ENCODE measurements at regions of chr7 and their contacts with region 1.

Region 1: GRCh38 chr7:100101016-100101862 is at the starts of genes AP4M1 and MCM7:
- DNase-seq: peak; percentile 98
- ATAC-seq: peak; percentile 85
- H3K4me3 ChIP-seq: peak within 1 kb of the TSS; percentile 80
- H3K27ac ChIP-seq: peak within 1 kb of the TSS; percentile 93
- H3K4me1 ChIP-seq: peaks cover 19% of the 10 kb centered on the region
- H3K27me3 ChIP-seq: no peaks in the 10 kb centered on the region
- CTCF ChIP-seq: no peak
- total RNA-seq, gene AP4M1: 17.9 and 23.9 TPM in 2 replicates
- total RNA-seq, gene MCM7: 208 and 226 TPM in 2 replicates

Region 2: DNA sequence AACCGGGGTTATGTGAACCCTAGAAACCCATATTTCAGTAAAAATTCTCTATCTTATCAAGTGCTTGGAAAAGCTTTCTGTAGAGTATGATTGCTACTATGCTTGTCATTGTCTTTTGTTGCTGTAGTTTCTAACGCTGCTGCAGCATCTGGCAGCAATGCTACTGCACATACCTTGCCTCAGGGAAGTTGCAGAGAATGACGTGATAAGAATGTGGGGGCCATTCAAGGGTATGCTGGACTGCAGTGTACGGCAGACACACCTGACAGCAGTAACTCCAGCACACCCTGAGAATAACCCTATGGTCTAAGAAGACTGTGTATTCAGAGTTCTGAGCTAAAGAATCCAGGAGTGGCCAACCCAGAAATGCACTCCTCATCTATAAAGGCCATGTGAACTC is 202.4 kb before region 1 on chr7:
- CTCF ChIA-PET with region 1: no interaction called
- POLR2A ChIA-PET with region 1: no interaction called
- intact Hi-C with region 1: no loop called
- DNase-seq: no peak
- ATAC-seq: no peak
- H3K4me3 ChIP-seq: no peak overlapping the region
- H3K27ac ChIP-seq: no peak overlapping the region
- H3K4me1 ChIP-seq: no peaks in the 10 kb centered on the region
- H3K27me3 ChIP-seq: no peaks in the 10 kb centered on the region
- CTCF ChIP-seq: no peak

Region 3: DNA sequence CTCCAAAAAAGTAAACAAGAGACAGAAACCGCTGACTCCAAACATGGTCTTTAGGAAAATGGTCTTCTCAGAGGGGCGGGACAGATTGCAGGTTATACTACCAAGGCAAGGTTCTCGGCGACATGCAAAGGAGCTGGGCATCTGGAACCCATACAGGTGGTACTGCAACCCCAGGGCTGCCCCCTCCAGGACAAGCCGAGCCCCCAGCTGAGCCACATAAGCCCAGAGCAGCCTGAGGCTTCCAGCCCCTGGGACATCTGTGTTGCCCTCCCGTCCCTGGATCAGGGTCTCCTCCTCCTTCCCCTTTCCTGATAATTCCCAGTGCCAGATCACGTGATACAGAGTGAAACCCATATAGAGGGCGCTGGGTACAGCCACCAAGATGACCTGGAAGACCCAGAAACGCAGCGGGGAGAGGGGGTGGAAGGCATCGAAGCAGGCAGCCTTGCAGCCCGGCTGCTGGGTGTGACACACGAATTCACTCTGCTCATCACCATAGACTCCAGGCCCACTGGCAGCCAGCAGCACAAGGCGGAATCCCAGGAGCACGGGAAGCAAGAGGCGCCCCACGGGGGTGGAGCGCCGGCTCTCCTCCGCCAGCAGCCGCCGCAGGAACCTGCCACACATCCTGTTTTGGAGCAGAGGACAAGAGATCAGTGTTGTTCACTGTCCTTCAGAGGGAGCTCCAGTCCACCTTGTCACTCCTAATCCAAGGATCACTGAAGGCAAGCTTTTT is 172.1 kb before region 1 on chr7 and contains the start of gene GJC3:
- CTCF ChIA-PET with region 1: no interaction called
- POLR2A ChIA-PET with region 1: no interaction called
- intact Hi-C with region 1: no loop called
- DNase-seq: peak; percentile 59
- ATAC-seq: peak; percentile 99
- H3K4me3 ChIP-seq: peak within 1 kb of the TSS; percentile 56
- H3K27ac ChIP-seq: no peak within 1 kb of the TSS
- H3K4me1 ChIP-seq: no peaks in the 10 kb centered on the region; the same call in 1 of the 2 replicates
- H3K27me3 ChIP-seq: peaks cover 31% of the 10 kb centered on the region
- CTCF ChIP-seq: peak; percentile 57
- total RNA-seq, gene GJC3: 0.18 TPM in 1 of 2 replicates, not detected in the other

Region 4: DNA sequence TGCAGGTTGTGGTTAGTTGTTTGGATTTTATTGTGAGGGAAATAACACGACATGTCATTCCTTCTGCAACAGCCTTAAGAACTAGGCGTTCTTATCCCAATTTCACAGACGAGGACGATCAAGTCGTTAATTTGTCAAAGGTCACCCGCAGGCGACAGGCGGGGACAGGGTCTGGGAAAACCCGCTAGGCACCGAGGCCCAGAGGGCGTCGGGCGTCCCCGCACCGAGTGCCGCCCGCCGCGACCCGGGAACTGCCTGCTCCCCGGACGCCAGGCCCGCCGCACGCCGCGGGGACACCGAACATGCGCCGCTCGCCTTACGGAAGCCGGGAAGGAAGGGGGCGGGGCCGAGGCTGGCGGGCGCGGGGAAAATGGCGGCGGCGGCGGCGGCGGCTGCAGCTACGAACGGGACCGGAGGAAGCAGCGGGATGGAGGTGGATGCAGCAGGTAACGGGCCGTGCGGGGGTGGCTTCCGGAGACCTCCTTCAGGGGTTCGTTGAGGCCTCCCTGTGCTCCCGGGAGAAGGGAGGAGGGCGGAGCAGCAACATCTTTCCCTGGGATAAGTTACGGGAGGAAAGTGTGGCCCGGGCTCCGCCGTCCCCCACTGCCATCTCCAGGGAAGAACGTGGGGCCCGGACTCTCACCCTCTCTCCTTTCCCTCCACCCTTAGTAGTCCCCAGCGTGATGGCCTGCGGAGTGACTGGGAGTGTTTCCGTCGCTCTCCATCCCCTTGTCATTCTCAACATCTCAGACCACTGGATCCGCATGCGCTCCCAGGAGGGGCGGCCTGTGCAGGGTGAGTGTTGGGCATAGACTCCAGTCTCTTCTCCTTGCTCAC is 12.4 kb before region 1 on chr7 and contains the start of gene COPS6:
- CTCF ChIA-PET with region 1: no interaction called
- POLR2A ChIA-PET with region 1: no interaction called
- intact Hi-C with region 1: loop called (anchors 1 kb)
- DNase-seq: peak; percentile 63
- ATAC-seq: peak; percentile 60
- H3K4me3 ChIP-seq: peak within 1 kb of the TSS; percentile 88
- H3K27ac ChIP-seq: peak within 1 kb of the TSS; percentile 59
- H3K4me1 ChIP-seq: peaks cover 29% of the 10 kb centered on the region
- H3K27me3 ChIP-seq: no peaks in the 10 kb centered on the region
- CTCF ChIP-seq: no peak
- total RNA-seq, gene COPS6: 95.7 and 110 TPM in 2 replicates

Region 5: GRCh38 chr7:100119062-100119700 is 17.9 kb after region 1 on chr7 and contains the starts of genes CNPY4 and TAF6:
- CTCF ChIA-PET with region 1: no interaction called
- POLR2A ChIA-PET with region 1: no interaction called
- intact Hi-C with region 1: loop called (anchors 2 kb)
- DNase-seq: peak; percentile 94
- ATAC-seq: peak; percentile 82
- H3K4me3 ChIP-seq: peak within 1 kb of the TSS; percentile 98
- H3K27ac ChIP-seq: peak within 1 kb of the TSS; percentile 49
- H3K4me1 ChIP-seq: peaks cover 13% of the 10 kb centered on the region; the same call in 1 of the 2 replicates
- H3K27me3 ChIP-seq: no peaks in the 10 kb centered on the region
- CTCF ChIP-seq: no peak
- total RNA-seq, gene CNPY4: 7.5 and 11.6 TPM in 2 replicates
- total RNA-seq, gene TAF6: 51.4 and 58.6 TPM in 2 replicates

Region 6: DNA sequence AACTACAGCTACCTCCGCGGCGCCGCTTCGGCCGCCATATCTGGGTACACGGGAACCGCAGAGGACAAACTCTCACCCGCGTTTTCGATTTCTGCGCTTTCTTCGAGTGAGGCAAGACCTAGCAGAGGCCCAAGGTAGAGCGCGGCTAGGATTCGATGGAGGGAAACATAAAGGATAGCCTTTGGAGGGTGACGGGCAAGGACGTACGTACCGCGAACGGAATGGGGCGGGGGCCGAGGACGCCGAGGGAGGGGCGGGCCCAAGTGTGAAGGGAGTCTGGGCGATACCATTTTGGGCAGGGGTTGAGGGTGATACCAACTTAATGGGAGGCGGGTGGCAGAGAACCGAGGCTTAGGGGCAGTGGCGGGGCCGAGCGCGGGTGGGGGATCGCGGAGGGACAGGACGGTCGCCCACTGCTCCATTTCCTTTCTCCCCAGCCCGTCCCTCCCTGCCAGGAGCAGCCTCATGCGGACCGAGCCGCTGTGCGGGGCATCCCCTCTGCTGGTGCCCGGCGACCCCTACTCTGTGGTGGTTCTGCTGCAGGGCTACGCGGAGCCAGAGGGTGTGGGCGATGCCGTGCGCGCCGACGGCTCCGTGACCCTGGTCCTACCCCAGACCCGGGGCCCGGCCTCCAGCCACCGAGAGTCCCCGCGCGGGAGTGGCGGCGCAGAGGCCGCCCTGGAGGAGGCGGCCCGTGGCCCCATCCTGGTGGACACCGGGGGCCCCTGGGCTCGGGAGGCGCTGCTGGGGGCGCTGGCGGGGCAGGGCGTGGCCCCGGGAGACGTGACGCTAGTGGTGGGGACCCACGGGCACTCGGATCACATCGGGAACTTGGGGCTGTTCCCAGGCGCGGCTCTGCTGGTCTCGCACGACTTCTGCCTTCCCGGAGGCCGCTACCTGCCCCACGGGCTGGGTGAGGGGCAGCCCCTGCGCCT is 26.0 kb after region 1 on chr7 and contains the start of gene MBLAC1:
- CTCF ChIA-PET with region 1: interaction called, 6 read pairs
- POLR2A ChIA-PET with region 1: interaction called, 5 read pairs
- intact Hi-C with region 1: loop called (anchors 1 kb)
- DNase-seq: peak; percentile 85
- ATAC-seq: peak; percentile 65
- H3K4me3 ChIP-seq: peak within 1 kb of the TSS; percentile 80
- H3K27ac ChIP-seq: peak within 1 kb of the TSS; percentile 92
- H3K4me1 ChIP-seq: 0 out of 2 replicates have a peak, but pooled peaks cover 4% of the 10 kb centered on the region
- H3K27me3 ChIP-seq: no peaks in the 10 kb centered on the region
- CTCF ChIP-seq: no peak
- total RNA-seq, gene MBLAC1: 2.7 and 4.3 TPM in 2 replicates

Measured in PC-3 (cell line).